ENCODE measurements at regions of chr5 and their contacts with region 1.

Region 1: GRCh38 chr5:74309050-74309449 is 331.5 kb downstream of the ENC1 start:
- DNase-seq: no peak
- H3K4me3 ChIP-seq: no peak overlapping the region
- H3K27ac ChIP-seq: no peak overlapping the region
- H3K4me1 ChIP-seq: peaks cover 1% of the 10 kb centered on the region
- H3K27me3 ChIP-seq: no peaks in the 10 kb centered on the region
- CTCF ChIP-seq: no peak
- EP300 ChIP-seq: no peak
- POLR2A ChIP-seq: no peak

Region 2: DNA sequence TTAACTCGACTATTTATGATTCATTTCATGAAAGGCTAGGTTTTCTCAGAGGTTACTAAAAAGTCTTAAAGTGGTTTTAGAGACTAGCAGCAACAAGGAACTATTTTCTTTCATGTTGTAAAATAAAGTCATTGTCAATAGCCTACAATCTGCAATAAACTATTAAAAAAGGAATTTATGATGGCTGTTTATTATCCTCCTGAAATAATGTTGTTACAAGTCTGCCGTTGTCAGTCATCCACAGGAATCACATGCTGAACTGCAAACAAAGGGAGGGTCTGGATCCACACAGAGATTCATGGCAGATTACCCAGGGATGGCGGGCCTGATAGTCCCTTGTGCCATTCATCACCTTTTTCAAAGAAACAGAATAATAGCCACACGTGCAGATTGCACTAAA is 1086.9 kb before region 1 on chr5:
- intact Hi-C with region 1: loop called in 1 of 4 experiments (anchors 5 kb)
- DNase-seq: no peak
- H3K4me3 ChIP-seq: no peak overlapping the region
- H3K27ac ChIP-seq: no peak overlapping the region
- H3K4me1 ChIP-seq: no peaks in the 10 kb centered on the region
- H3K27me3 ChIP-seq: no peaks in the 10 kb centered on the region
- CTCF ChIP-seq: no peak
- EP300 ChIP-seq: no peak
- POLR2A ChIP-seq: no peak

Region 3: GRCh38 chr5:74141053-74141452 is 168.0 kb before region 1 on chr5:
- intact Hi-C with region 1: no loop called
- DNase-seq: no peak
- H3K4me3 ChIP-seq: no peak overlapping the region
- H3K27ac ChIP-seq: no peak overlapping the region
- H3K4me1 ChIP-seq: peaks cover 1% of the 10 kb centered on the region
- H3K27me3 ChIP-seq: no peaks in the 10 kb centered on the region
- CTCF ChIP-seq: no peak
- EP300 ChIP-seq: no peak
- POLR2A ChIP-seq: no peak

Region 4: DNA sequence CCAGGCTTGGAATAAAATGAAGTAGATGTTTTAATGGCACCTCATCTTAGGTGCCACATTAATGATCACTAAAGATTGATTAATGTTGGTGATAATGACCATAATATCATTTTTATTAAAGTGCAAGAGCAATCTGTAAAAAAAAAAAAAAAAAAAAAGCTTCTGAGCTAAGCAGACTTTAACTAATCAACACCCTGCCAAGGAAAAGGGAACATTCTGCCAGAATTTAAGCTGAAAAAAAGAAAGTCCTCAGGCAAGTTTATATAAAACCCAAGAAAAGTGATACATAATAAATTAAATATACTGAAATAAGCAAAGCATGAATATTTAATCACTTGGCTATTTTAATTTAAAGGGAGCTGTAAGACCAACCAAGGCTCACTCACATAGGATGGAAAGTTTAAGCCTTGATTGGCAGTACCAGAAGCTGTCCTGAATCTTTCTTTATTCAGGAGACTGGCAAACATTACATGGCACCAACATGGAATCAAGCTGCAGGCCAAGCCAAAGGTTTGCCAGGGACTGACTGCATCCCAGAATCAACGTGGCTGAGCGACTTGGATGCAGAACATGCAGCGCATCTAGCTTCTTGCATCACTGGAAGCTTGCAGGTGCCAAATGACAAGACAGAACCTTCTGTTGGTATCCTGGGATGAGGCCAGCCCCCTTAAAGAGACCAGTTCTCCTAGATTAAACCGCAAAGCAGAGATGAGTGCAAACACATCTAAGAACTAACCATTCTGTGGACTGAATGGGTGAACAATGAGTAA is 82.1 kb before region 1 on chr5:
- intact Hi-C with region 1: no loop called
- DNase-seq: no peak
- H3K4me3 ChIP-seq: no peak overlapping the region
- H3K27ac ChIP-seq: no peak overlapping the region
- H3K4me1 ChIP-seq: no peaks in the 10 kb centered on the region
- H3K27me3 ChIP-seq: no peaks in the 10 kb centered on the region
- CTCF ChIP-seq: no peak
- EP300 ChIP-seq: no peak
- POLR2A ChIP-seq: no peak

Region 5: DNA sequence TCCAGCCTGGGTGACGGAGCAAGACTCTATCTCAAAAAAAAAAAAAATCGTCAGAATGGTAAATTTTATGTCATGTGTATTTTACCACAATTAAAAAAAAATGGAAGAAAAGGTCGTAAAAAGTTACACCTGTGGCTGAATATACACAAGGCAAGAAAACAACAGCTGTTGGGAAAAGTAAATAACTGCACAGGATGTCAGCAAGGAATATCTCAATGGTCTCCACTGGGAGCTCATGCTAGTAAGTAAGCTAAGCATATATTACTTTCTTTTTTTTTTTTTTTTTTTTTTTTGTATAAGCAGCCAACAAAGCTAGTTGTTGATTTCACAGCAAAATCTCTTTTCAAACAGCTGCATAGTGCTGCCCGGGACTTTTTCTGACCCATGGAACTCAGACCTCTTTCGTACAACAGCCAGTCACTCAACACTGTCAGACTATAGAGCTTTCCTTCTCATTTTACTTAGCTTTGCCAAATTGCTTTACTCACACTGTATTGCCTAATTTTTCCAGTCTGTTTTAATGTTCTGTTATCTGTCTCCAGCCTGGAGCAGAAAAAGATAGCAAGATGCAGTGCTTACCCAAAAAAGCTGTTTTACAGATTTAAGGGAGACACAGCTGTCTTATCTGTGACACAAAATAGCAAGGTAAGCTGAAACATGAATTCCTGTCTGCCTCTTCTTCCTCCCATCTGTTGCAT is 155.6 kb after region 1 on chr5:
- intact Hi-C with region 1: no loop called
- DNase-seq: no peak
- H3K4me3 ChIP-seq: no peak overlapping the region
- H3K27ac ChIP-seq: no peak overlapping the region
- H3K4me1 ChIP-seq: peaks cover 1% of the 10 kb centered on the region
- H3K27me3 ChIP-seq: no peaks in the 10 kb centered on the region
- CTCF ChIP-seq: no peak
- EP300 ChIP-seq: no peak
- POLR2A ChIP-seq: no peak